ENCODE measurements at regions of chr12 and their contacts with region 1.

Region 1: DNA sequence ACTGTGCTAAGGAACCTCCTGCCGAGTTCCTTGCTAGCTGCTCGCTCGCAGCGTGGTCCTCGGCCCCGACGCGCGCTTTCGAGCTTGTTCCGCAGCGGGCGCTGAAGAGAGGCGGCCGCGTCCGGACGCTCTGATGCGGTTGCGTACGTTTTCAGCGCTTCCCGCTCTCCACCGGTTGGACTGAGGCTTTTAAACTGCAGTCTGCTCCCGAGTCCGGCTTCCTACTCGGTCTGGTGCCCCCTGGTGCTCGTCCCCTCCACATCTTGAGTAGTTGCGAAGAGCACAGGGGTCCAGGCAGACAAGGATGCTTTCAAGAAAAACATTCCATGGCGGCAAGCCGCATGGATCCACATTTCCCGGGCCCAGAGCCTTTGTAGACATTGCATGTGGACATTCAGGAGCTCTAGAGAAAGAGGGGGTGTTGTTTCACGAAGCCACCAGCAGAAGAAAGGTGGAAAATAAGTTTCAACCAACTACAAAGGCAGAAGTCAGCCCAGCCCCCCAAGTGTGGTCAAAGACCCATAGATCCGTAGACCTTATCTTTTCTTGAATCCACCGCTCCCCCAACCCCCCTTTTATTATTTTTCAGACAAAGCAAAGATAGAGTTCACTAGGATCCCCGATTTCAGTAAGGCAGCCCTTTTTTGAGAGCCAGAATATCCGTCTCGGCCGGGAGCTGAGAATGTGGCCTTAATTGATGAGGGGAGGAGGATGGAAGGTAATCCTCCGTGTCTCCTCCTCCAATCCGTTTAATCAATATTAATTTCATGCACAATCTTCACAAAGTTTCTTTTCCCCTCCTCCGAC is 984 bp upstream of the WNK1 start:
- DNase-seq: peak; percentile 64 to 94 (median 78)
- ATAC-seq: peak; percentile 23
- H3K4me3 ChIP-seq: peak overlapping the region; percentile 81
- H3K4me3 Mint-ChIP-seq: no peak overlapping the region
- H3K27ac ChIP-seq: peak overlapping the region; percentile 61 to 87
- H3K27ac Mint-ChIP-seq: no peak overlapping the region
- H3K4me1 ChIP-seq: peaks cover 20% of the 10 kb centered on the region
- H3K4me1 Mint-ChIP-seq: peaks cover 11% of the 10 kb centered on the region
- H3K27me3 ChIP-seq: no peaks in the 10 kb centered on the region
- H3K27me3 Mint-ChIP-seq: no peaks in the 10 kb centered on the region
- CTCF ChIP-seq: peak; percentile 74

Region 2: GRCh38 chr12:614411-614970 is 136.9 kb before region 1 on chr12:
- CTCF ChIA-PET with region 1: interaction called, 6 read pairs
- POLR2A ChIA-PET with region 1: interaction called, 11 read pairs
- intact Hi-C with region 1: no loop called
- DNase-seq: peak in 12 of 14 experiments; percentile 10 to 66 (median 24)
- ATAC-seq: peak; percentile 58
- H3K4me3 ChIP-seq: no peak overlapping the region
- H3K4me3 Mint-ChIP-seq: no peak overlapping the region
- H3K27ac ChIP-seq: no peak overlapping the region
- H3K27ac Mint-ChIP-seq: no peak overlapping the region
- H3K4me1 ChIP-seq: peaks cover 36% of the 10 kb centered on the region
- H3K4me1 Mint-ChIP-seq: peaks cover 44% of the 10 kb centered on the region
- H3K27me3 ChIP-seq: no peaks in the 10 kb centered on the region
- H3K27me3 Mint-ChIP-seq: no peaks in the 10 kb centered on the region
- CTCF ChIP-seq: peak; percentile 60

Region 3: GRCh38 chr12:662566-663292 is 88.7 kb before region 1 on chr12:
- CTCF ChIA-PET with region 1: interaction called, 24 read pairs
- POLR2A ChIA-PET with region 1: interaction called, 56 read pairs
- intact Hi-C with region 1: no loop called
- DNase-seq: peak in 1 of 14 experiments; percentile 25
- ATAC-seq: no peak
- H3K4me3 ChIP-seq: peak overlapping the region; percentile 1
- H3K4me3 Mint-ChIP-seq: peak overlapping the region; percentile 84
- H3K27ac ChIP-seq: no peak overlapping the region
- H3K27ac Mint-ChIP-seq: peak overlapping the region; percentile 63
- H3K4me1 ChIP-seq: peaks cover 67% of the 10 kb centered on the region
- H3K4me1 Mint-ChIP-seq: peaks cover 62% of the 10 kb centered on the region
- H3K27me3 ChIP-seq: no peaks in the 10 kb centered on the region
- H3K27me3 Mint-ChIP-seq: no peaks in the 10 kb centered on the region
- CTCF ChIP-seq: no peak

Region 4: GRCh38 chr12:690466-690865 is 60.9 kb before region 1 on chr12:
- CTCF ChIA-PET with region 1: interaction called, 31 read pairs
- POLR2A ChIA-PET with region 1: interaction called, 67 read pairs
- intact Hi-C with region 1: loop called (anchors 1 to 5 kb)
- DNase-seq: no peak
- ATAC-seq: no peak
- H3K4me3 ChIP-seq: no peak overlapping the region
- H3K4me3 Mint-ChIP-seq: no peak overlapping the region
- H3K27ac ChIP-seq: no peak overlapping the region
- H3K27ac Mint-ChIP-seq: no peak overlapping the region
- H3K4me1 ChIP-seq: peaks cover 12% of the 10 kb centered on the region
- H3K4me1 Mint-ChIP-seq: peaks cover 36% of the 10 kb centered on the region
- H3K27me3 ChIP-seq: no peaks in the 10 kb centered on the region
- H3K27me3 Mint-ChIP-seq: no peaks in the 10 kb centered on the region
- CTCF ChIP-seq: no peak

Region 5: DNA sequence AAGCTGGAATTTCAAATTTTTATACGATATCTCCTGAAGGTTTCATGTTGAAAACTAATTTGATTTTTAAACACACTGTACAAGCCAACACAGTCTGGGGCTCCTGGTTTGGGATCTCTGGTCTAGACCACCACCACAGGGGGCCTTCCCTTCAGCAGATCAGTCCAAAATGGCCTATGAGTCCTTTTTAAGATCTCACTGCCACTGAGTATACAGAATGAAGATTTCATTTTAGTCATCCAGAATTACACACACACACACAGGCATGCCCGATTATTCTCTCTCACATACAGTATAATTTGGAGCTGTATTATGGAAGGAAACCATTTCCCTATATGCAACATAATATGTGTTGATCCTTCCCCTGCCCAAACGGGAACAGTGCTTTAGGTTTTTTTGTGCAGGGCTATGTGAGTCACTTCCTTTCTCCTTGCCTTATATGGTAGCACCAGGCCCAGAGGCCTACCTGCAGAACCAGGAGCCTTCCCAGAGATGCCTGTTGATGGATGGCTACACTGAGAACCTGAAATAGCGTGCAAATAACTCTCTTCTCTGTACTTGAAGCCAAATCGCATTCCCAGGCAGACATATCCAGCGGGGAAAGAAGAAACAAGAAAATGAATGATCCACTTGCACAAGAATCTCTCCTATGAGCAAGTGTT is 27.1 kb before region 1 on chr12:
- CTCF ChIA-PET with region 1: interaction called, 35 read pairs
- POLR2A ChIA-PET with region 1: interaction called, 166 read pairs
- intact Hi-C with region 1: loop called in 1 of 2 experiments (anchors 1 kb)
- DNase-seq: peak in 7 of 14 experiments; percentile 5 to 63 (median 54)
- ATAC-seq: peak; percentile 55
- H3K4me3 ChIP-seq: no peak overlapping the region
- H3K4me3 Mint-ChIP-seq: no peak overlapping the region
- H3K27ac ChIP-seq: no peak overlapping the region
- H3K27ac Mint-ChIP-seq: peak overlapping the region; percentile 87
- H3K4me1 ChIP-seq: peaks cover 47% of the 10 kb centered on the region
- H3K4me1 Mint-ChIP-seq: peaks cover 89% of the 10 kb centered on the region
- H3K27me3 ChIP-seq: no peaks in the 10 kb centered on the region
- H3K27me3 Mint-ChIP-seq: no peaks in the 10 kb centered on the region
- CTCF ChIP-seq: no peak

Region 6: DNA sequence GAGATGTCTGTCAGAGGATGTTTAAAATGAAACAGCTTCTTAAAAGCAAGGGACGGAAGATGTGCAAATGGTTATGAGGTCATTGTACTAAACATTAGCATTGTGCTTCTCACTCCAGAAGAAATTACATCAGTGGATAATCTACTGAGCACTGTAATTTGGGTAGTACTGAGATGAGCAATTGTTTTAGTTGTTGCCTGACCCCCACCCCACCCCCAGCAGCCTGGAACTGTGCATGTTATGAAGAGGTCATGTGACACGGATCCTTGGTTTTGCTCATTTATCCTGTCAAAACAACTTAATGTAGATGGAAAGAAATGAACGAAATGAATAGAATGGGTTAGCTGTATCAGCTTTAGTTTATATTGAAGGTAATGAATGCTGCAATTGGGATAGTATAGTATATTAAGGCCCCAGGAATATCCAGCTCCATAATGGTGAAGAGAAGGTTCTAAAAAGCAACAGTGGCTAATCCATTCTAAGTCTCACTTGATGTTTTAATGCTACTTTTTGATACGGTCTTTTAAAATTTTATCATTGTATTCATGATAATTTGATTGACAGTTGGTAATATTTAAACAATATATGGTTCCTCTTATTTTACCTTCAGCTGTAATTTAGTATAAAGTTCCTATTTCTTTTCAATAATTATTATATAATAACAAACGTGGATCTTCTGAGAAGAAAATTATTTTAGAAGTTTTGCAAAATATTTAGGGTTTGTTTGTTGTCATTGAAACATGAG is 59.4 kb after region 1 on chr12:
- CTCF ChIA-PET with region 1: interaction called, 22 read pairs
- POLR2A ChIA-PET with region 1: interaction called, 49 read pairs
- intact Hi-C with region 1: loop called (anchors 2 kb)
- DNase-seq: no peak
- ATAC-seq: peak; percentile 34
- H3K4me3 ChIP-seq: no peak overlapping the region
- H3K4me3 Mint-ChIP-seq: peak overlapping the region; percentile 64
- H3K27ac ChIP-seq: peak overlapping the region in 1 of 2 donors; percentile 26
- H3K27ac Mint-ChIP-seq: peak overlapping the region; percentile 78
- H3K4me1 ChIP-seq: peaks cover 39% of the 10 kb centered on the region
- H3K4me1 Mint-ChIP-seq: peaks cover 83% of the 10 kb centered on the region
- H3K27me3 ChIP-seq: no peaks in the 10 kb centered on the region
- H3K27me3 Mint-ChIP-seq: no peaks in the 10 kb centered on the region
- CTCF ChIP-seq: no peak

Region 7: DNA sequence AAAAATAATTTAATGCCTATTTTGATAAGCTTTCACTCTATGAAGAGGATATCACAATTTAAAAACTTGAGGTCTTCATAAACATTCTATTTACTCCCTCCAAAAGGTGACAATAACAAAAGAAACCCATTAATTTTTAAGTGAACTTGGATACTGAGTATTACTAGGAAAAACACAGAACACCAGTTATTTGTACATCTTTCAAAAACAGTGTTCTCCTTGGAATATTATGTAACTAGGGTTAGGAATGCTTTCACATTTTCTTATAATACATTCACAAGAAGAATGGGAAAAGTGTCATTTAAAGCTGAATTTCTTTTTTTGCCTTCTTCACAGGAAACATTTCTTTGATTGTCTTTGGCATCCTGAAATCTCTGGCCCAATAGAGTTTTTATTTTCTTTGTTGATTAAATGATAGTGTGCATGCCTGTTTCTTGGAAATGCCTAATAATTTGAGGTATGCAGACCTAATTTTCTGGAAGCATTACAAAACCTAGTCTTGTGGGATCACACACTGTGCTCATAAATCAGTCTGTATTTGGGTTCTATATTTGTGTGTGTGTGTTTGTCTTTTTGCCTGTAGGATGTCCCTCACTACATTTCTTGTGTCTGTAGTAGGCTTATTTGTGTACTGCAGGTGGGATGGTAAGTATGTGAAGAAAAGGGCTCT is 77.5 kb after region 1 on chr12:
- CTCF ChIA-PET with region 1: no interaction called
- POLR2A ChIA-PET with region 1: no interaction called
- intact Hi-C with region 1: no loop called
- DNase-seq: no peak
- ATAC-seq: no peak
- H3K4me3 ChIP-seq: no peak overlapping the region
- H3K4me3 Mint-ChIP-seq: no peak overlapping the region
- H3K27ac ChIP-seq: no peak overlapping the region
- H3K27ac Mint-ChIP-seq: peak overlapping the region; percentile 42
- H3K4me1 ChIP-seq: peaks cover 5% of the 10 kb centered on the region
- H3K4me1 Mint-ChIP-seq: peaks cover 65% of the 10 kb centered on the region
- H3K27me3 ChIP-seq: no peaks in the 10 kb centered on the region
- H3K27me3 Mint-ChIP-seq: no peaks in the 10 kb centered on the region
- CTCF ChIP-seq: no peak